Mammary epithelial cell (primary cell): ENCODE measurements at regions of chr1 and their contacts with region 1.

Region 1: GRCh38 chr1:152347116-152347728 is 12.6 kb downstream of the FLG2 start:
- DNase-seq: peak; percentile 64
- H3K4me3 ChIP-seq: no peak overlapping the region
- H3K27ac ChIP-seq: no peak overlapping the region
- H3K4me1 ChIP-seq: no peaks in the 10 kb centered on the region
- H3K27me3 ChIP-seq: peaks cover 7% of the 10 kb centered on the region
- CTCF ChIP-seq: peak; percentile 93 to 99

Region 2: GRCh38 chr1:152162806-152163463 is 184.3 kb before region 1 on chr1:
- CTCF ChIA-PET with region 1: no interaction called
- dilution Hi-C with region 1: no loop called
- in situ Hi-C with region 1: no loop called
- intact Hi-C with region 1: no loop called
- DNase-seq: peak; percentile 81
- H3K4me3 ChIP-seq: no peak overlapping the region
- H3K27ac ChIP-seq: peak overlapping the region; percentile 22
- H3K4me1 ChIP-seq: peaks cover 33% of the 10 kb centered on the region
- H3K27me3 ChIP-seq: no peaks in the 10 kb centered on the region
- CTCF ChIP-seq: peak in 1 of 2 donors; percentile 5

Region 3: GRCh38 chr1:152227310-152227928 is 119.8 kb before region 1 on chr1:
- CTCF ChIA-PET with region 1: no interaction called
- dilution Hi-C with region 1: no loop called
- in situ Hi-C with region 1: no loop called
- intact Hi-C with region 1: loop called (anchors 2 kb)
- DNase-seq: peak; percentile 42
- H3K4me3 ChIP-seq: no peak overlapping the region
- H3K27ac ChIP-seq: no peak overlapping the region
- H3K4me1 ChIP-seq: peaks cover 34% of the 10 kb centered on the region
- H3K27me3 ChIP-seq: no peaks in the 10 kb centered on the region
- CTCF ChIP-seq: peak; percentile 7 to 41

Region 4: GRCh38 chr1:152374451-152374850 is 27.2 kb after region 1 on chr1:
- CTCF ChIA-PET with region 1: no interaction called
- dilution Hi-C with region 1: no loop called
- in situ Hi-C with region 1: no loop called
- intact Hi-C with region 1: no loop called
- DNase-seq: no peak
- H3K4me3 ChIP-seq: no peak overlapping the region
- H3K27ac ChIP-seq: no peak overlapping the region
- H3K4me1 ChIP-seq: no peaks in the 10 kb centered on the region
- H3K27me3 ChIP-seq: peaks cover 6% of the 10 kb centered on the region
- CTCF ChIP-seq: no peak

Region 5: DNA sequence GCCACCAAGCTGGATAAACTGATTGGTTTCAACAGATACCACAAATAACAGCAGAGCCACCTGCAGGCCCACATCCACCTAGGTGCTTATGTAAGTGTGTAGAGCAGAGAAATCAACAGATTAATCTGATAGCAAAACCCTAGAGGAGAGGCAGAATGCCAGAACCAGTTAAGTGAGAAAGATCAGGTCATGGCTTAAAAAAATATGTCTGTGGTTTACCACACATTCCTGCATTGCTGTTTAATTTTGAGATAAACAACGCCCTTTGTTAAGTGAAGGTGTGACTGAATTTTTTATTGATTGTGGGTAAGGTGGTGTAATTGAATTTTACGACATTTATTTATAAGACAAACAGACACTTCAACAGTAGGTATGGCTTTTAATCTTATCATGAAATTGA is 45.7 kb after region 1 on chr1:
- CTCF ChIA-PET with region 1: no interaction called
- dilution Hi-C with region 1: no loop called
- in situ Hi-C with region 1: no loop called
- intact Hi-C with region 1: loop called (anchors 5 kb)
- DNase-seq: peak; percentile 88
- H3K4me3 ChIP-seq: no peak overlapping the region
- H3K27ac ChIP-seq: no peak overlapping the region
- H3K4me1 ChIP-seq: peaks cover 9% of the 10 kb centered on the region
- H3K27me3 ChIP-seq: peaks cover 37% of the 10 kb centered on the region
- CTCF ChIP-seq: peak in 1 of 2 donors; percentile 24

Region 6: GRCh38 chr1:152440635-152441471 is 93.6 kb after region 1 on chr1:
- CTCF ChIA-PET with region 1: interaction called, 3 read pairs
- dilution Hi-C with region 1: no loop called
- in situ Hi-C with region 1: loop called in 1 of 2 experiments (anchors 5 kb)
- intact Hi-C with region 1: loop called (anchors 1 kb)
- DNase-seq: peak; percentile 68
- H3K4me3 ChIP-seq: no peak overlapping the region
- H3K27ac ChIP-seq: no peak overlapping the region
- H3K4me1 ChIP-seq: peaks cover 34% of the 10 kb centered on the region
- H3K27me3 ChIP-seq: no peaks in the 10 kb centered on the region
- CTCF ChIP-seq: peak; percentile 91 to 92